AG04450 (cell line): ENCODE measurements at regions of chr6 and their contacts with region 1.

Region 1: DNA sequence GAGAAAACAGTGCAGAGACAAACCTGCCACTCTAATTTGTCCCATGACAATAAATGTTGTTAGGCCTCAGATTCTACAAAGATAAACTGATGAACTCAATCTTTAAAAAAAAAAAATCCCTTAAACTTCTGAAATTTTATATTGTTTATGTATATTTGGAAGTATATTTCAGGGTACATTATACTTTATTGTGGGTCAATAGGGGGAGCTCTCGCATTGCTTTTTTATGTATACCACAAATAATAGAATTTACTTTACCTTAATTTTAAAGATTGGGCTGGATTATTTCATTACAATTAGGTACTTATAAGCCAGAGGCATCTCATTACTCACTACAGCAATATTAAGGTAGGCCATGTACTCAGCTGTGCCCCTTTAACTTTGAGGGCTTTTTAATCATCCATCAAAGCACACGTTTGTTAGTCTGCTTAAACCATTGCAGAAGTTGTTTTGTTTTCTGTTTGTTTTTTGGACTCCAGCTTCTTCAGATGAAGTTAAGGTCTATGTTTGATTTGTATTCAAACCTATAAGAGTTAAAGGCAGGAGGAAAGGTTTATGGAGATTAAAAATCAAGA is 56.3 kb upstream of the EYA4 start:
- DNase-seq: no peak
- H3K4me3 ChIP-seq: no peak overlapping the region
- H3K27ac ChIP-seq: no peak overlapping the region
- H3K27me3 ChIP-seq: no peaks in the 10 kb centered on the region
- CTCF ChIP-seq: peak; percentile 63

Region 2: DNA sequence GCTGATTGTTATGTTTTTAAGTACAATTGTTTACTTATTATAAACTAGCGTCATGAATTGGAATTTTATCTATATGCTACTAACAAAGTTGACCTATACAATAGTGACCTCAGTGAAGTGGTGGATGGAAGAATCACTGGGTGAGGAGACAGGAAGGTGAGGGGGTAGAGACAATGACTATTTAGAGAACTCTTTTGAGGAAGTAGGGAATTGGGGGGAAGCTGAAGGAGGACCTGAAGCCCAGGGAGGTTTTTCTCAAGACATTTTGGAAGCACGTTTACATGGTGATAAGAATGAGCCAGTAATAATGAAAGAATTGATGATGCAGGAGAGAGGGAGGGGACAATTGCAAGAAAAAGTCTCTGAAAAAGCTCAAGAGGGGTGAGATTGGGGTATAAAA is 274.1 kb before region 1 on chr6:
- CTCF ChIA-PET with region 1: no interaction called
- POLR2A ChIA-PET with region 1: no interaction called
- DNase-seq: no peak
- H3K4me3 ChIP-seq: no peak overlapping the region
- H3K27ac ChIP-seq: no peak overlapping the region
- H3K27me3 ChIP-seq: no peaks in the 10 kb centered on the region
- CTCF ChIP-seq: no peak

Region 3: GRCh38 chr6:133136177-133136880 is 48.6 kb before region 1 on chr6:
- CTCF ChIA-PET with region 1: no interaction called
- POLR2A ChIA-PET with region 1: no interaction called
- DNase-seq: no peak
- H3K4me3 ChIP-seq: no peak overlapping the region
- H3K27ac ChIP-seq: no peak overlapping the region
- H3K27me3 ChIP-seq: no peaks in the 10 kb centered on the region
- CTCF ChIP-seq: no peak

Region 4: DNA sequence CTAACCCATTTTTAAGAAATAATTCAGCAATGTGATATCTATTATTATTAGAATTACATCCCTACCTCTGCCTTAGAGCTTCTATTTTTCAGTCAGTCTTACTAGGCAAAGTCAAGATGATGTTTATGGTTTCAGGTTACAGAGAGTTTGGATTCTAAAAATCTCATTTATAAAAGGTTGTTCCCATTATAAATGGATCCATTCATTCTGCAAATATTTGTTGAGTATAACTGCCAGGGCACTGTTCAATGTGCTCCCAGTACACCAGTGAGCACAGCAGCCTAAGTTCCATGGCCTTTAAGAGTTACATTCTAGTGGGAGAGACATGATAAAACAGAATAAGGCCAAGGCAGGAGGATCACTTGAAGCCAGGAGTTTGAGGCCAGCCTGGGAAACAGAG is 19.6 kb before region 1 on chr6:
- CTCF ChIA-PET with region 1: interaction called, 10 read pairs
- POLR2A ChIA-PET with region 1: no interaction called
- DNase-seq: no peak
- H3K4me3 ChIP-seq: no peak overlapping the region
- H3K27ac ChIP-seq: no peak overlapping the region
- H3K27me3 ChIP-seq: no peaks in the 10 kb centered on the region
- CTCF ChIP-seq: no peak

Region 5: GRCh38 chr6:133170600-133170999 is 14.3 kb before region 1 on chr6:
- CTCF ChIA-PET with region 1: interaction called, 10 read pairs
- POLR2A ChIA-PET with region 1: no interaction called
- DNase-seq: no peak
- H3K4me3 ChIP-seq: no peak overlapping the region
- H3K27ac ChIP-seq: no peak overlapping the region
- H3K27me3 ChIP-seq: no peaks in the 10 kb centered on the region
- CTCF ChIP-seq: no peak

Region 6: DNA sequence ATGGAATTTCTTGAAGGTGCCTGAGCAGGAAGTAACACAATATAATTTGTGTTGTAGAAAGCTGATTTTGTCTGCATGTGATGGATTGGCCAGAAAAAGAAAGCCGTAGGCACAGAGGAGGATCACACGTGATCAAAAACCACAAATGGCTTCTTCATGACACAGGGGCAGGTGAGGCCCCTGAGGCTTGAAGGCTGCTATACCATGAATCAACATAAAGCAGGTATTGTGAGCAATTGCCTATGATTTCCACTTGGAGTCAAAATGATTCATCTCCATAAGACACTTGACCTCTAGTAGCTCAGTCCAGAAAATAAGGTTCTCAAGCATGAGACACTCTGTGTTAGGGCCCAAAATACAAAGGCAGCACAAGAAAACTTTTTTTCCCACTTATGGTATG is 13.8 kb after region 1 on chr6:
- CTCF ChIA-PET with region 1: interaction called, 13 read pairs
- POLR2A ChIA-PET with region 1: no interaction called
- DNase-seq: no peak
- H3K4me3 ChIP-seq: no peak overlapping the region
- H3K27ac ChIP-seq: no peak overlapping the region
- H3K27me3 ChIP-seq: no peaks in the 10 kb centered on the region
- CTCF ChIP-seq: no peak

Region 7: DNA sequence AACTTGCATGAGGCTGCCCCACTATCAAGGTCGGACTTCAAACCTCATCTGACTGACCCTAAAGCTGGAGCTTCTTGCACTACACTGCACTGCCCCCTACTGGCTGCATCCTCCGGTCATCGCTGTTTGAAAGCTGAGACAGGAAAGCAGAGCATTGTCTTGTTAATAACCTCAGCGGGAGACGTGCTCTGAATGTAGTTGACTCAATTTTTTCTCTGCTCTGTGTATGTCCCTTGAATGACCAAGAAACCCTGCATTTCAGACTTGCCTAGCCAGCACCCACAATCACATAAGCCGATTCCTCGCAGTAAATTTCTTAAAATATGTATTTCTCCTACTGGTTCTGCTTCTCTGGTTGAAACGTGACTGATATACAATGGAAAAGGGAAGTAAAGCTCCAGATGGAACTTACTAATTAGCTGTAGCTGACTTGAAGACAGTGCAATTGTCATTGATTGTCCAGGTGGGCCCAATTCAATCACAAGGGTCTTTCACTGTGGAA is 731.8 kb after region 1 on chr6:
- CTCF ChIA-PET with region 1: interaction called, 14 read pairs
- POLR2A ChIA-PET with region 1: no interaction called
- DNase-seq: peak; percentile 89
- H3K4me3 ChIP-seq: no peak overlapping the region
- H3K27ac ChIP-seq: no peak overlapping the region
- H3K27me3 ChIP-seq: no peaks in the 10 kb centered on the region
- CTCF ChIP-seq: peak; percentile 97